HAP-1 (cell line): ENCODE measurements at regions of chr19 and their contacts with region 1.

Region 1: GRCh38 chr19:17865364-17866311 is 5.9 kb downstream of the RPL18A start:
- DNase-seq: peak; percentile 64 to 66
- H3K4me3 ChIP-seq: no peak overlapping the region
- H3K4me1 ChIP-seq: peaks cover 13% of the 10 kb centered on the region
- H3K27me3 ChIP-seq: no peaks in the 10 kb centered on the region

Region 2: GRCh38 chr19:17985037-17985818 is 119.6 kb after region 1 on chr19:
- in situ Hi-C with region 1: loop called (anchors 5 kb)
- DNase-seq: peak in 1 of 2 experiments; percentile 48
- H3K4me3 ChIP-seq: no peak overlapping the region
- H3K4me1 ChIP-seq: no peaks in the 10 kb centered on the region
- H3K27me3 ChIP-seq: no peaks in the 10 kb centered on the region

Region 3: GRCh38 chr19:19145684-19146608 is 1280.3 kb after region 1 on chr19:
- in situ Hi-C with region 1: no loop called
- DNase-seq: peak in 1 of 2 experiments; percentile 91
- H3K4me3 ChIP-seq: no peak overlapping the region
- H3K4me1 ChIP-seq: no peaks in the 10 kb centered on the region
- H3K27me3 ChIP-seq: no peaks in the 10 kb centered on the region